GM10248 (cell line): ENCODE measurements at regions of chr6 and their contacts with region 1.

Region 1: DNA sequence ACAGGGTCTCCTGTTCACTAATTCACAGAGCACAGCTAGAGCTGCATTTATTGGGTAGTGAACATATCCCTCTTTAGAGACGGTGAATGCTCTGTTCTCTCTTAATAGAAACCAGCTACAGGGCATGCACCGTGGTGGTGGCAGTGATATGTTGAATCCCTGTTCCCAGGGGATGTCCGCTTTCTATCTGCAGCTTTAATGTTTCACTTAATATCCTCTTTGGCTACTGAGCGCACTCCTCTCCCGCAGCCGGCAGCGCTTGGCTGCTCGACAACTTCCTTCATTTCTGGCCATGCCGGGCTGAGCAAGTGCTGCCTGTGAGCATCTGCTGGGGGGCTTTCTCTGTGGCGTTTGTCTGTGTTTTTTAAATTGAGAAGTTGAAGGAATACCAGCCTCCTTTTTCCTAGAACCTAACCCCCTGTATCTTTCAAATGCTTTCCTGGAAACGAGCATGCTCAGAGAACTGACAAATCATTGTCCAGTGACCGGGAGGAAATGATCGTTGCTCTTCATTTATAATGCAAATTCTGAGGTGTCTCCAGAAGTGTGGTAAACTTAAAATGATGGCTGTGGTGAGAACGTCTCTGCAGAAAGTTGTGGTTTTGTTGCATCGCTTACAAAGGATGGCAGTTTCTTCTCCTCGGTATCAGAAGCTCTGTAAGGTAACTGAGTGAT is 297.9 kb downstream of the UTRN start:
- DNase-seq: peak; percentile 41
- CTCF ChIP-seq: no peak

Region 2: GRCh38 chr6:144343701-144344428 is 239.2 kb before region 1 on chr6:
- CTCF ChIA-PET with region 1: no interaction called
- POLR2A ChIA-PET with region 1: no interaction called
- DNase-seq: peak; percentile 45
- CTCF ChIP-seq: no peak

Region 3: GRCh38 chr6:144595266-144595665 is 12.2 kb after region 1 on chr6:
- CTCF ChIA-PET with region 1: interaction called, 10 read pairs
- POLR2A ChIA-PET with region 1: no interaction called
- DNase-seq: no peak
- CTCF ChIP-seq: no peak